Activated CD4-positive, alpha-beta T cell treated with anti-CD3 and anti-CD28 coated beads, Interleukin-2, amount 10 ng/mL, durations not matched to agents 24 days and 14 days (primary cell): ENCODE measurements at regions of chr9 and their contacts with region 1.

Region 1: DNA sequence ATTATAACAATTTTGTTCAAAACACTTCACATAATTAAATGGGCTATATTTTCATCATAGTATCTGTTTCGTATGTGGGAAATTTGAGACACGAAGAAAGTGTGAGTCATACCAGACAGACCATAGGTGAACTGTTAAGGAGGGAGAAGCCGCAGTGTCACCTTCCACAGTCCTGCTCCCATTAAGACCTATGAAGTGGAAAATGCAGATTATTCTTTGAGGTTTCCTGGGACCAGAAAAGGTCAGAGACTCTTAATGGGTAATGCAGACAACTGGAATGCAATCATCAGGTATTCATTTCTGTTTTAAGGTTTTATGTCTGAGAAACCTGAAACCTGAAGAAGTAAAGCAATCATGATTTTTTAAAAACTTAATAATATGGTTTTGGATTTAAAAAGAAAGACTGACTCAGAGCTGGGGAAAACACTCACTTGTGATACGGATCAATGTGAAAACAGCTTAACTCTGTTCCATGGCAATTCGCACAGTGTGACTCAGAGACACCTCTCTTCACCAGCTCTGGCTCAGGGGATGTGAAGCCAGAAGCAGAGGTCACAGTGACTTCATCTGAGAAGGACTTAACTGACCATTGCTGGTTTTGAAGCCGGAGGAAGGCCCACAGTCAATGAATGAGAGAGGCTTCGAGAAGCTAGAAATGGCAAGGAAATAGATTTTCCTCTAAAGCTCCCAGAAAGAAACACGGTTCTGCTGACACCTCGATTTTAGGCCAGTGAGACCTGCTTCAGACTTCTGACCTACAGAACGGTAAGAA is 17.2 kb upstream of the GCNT1 start:
- DNase-seq: peak; percentile 69
- H3K4me3 Mint-ChIP-seq: peak overlapping the region; percentile 88
- H3K27ac Mint-ChIP-seq: peak overlapping the region; percentile 98
- H3K4me1 Mint-ChIP-seq: peaks cover 50% of the 10 kb centered on the region
- H3K27me3 Mint-ChIP-seq: no peaks in the 10 kb centered on the region

Region 2: GRCh38 chr9:75890472-75891276 is 551.1 kb before region 1 on chr9 and contains the start of gene PCSK5:
- intact Hi-C with region 1: loop called (anchors 10 kb)
- DNase-seq: peak; percentile 95
- H3K4me3 Mint-ChIP-seq: peak within 1 kb of the TSS; percentile 94
- H3K27ac Mint-ChIP-seq: peak within 1 kb of the TSS; percentile 74
- H3K4me1 Mint-ChIP-seq: peaks cover 27% of the 10 kb centered on the region
- H3K27me3 Mint-ChIP-seq: peaks cover 46% of the 10 kb centered on the region
- total RNA-seq, gene PCSK5: 1.6 and 1.9 TPM in 2 replicates

Region 3: GRCh38 chr9:76403352-76403751 is 38.4 kb before region 1 on chr9:
- intact Hi-C with region 1: loop called (anchors 1 kb)
- DNase-seq: peak; percentile 80
- H3K4me3 Mint-ChIP-seq: peak overlapping the region; percentile 66
- H3K27ac Mint-ChIP-seq: peak overlapping the region; percentile 71
- H3K4me1 Mint-ChIP-seq: peaks cover 29% of the 10 kb centered on the region
- H3K27me3 Mint-ChIP-seq: peaks cover 2% of the 10 kb centered on the region

Region 4: DNA sequence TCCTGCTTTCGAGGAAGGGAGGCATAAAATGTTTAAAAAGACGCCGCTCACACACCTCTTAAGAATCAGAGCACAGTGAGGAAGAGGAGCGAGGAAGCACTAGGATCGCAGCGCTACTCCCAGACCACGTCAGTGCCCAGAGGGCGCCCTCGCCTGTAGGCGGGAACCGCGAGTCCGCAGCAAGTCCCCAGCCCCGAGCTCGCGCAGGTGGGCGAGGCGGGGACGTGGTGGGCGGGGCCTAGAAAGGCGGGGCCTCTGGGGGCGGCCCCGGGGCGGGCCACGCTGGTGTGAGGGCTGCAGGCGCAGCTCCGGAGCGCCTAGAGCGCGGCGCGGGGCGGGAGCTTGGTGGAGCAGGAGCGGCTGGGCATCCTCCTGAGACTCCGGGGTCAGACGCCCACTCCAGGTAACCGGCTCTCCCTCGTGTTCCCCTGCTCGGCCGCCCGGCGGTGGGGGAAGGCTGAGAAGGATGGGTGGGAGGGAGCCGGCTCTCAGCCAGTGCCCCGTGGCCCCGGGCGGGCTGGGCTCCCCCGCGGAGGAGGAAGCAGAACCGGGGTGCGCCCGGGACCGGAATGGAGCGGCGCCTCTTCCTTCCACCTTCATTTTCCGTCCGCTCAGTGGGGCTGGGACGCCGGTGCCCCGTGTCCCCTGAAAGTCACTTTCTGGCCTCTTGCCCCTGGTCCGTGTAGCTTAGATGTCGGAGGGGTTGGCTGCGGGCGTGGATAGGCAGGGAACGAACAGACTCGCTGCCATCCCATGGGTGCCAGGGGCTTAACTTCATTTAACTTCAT is 17.4 kb after region 1 on chr9 and contains the start of gene GCNT1:
- intact Hi-C with region 1: loop called (anchors 2 kb)
- DNase-seq: peak; percentile 99
- H3K4me3 Mint-ChIP-seq: peak within 1 kb of the TSS; percentile 92
- H3K27ac Mint-ChIP-seq: peak within 1 kb of the TSS; percentile 88
- H3K4me1 Mint-ChIP-seq: peaks cover 28% of the 10 kb centered on the region
- H3K27me3 Mint-ChIP-seq: no peaks in the 10 kb centered on the region
- total RNA-seq, gene GCNT1: 7.0 and 9.8 TPM in 2 replicates

Region 5: GRCh38 chr9:76576344-76576743 is 134.6 kb after region 1 on chr9:
- intact Hi-C with region 1: loop called (anchors 1 kb)
- DNase-seq: peak; percentile 89
- H3K4me3 Mint-ChIP-seq: peak overlapping the region; percentile 65
- H3K27ac Mint-ChIP-seq: peak overlapping the region; percentile 88
- H3K4me1 Mint-ChIP-seq: peaks cover 26% of the 10 kb centered on the region
- H3K27me3 Mint-ChIP-seq: peaks cover 3% of the 10 kb centered on the region

Region 6: GRCh38 chr9:76586390-76587314 is 144.9 kb after region 1 on chr9:
- intact Hi-C with region 1: no loop called
- DNase-seq: no peak
- H3K4me3 Mint-ChIP-seq: no peak overlapping the region
- H3K27ac Mint-ChIP-seq: no peak overlapping the region
- H3K4me1 Mint-ChIP-seq: peaks cover 3% of the 10 kb centered on the region
- H3K27me3 Mint-ChIP-seq: peaks cover 6% of the 10 kb centered on the region